Calu3 (cell line): ENCODE measurements at regions of chr5 and their contacts with region 1.

Region 1: GRCh38 chr5:112691758-112692157 is 45.9 kb upstream of the APC start:
- DNase-seq: peak; percentile 59
- H3K4me3 Mint-ChIP-seq: no peak overlapping the region
- H3K27ac Mint-ChIP-seq: no peak overlapping the region
- H3K4me1 Mint-ChIP-seq: peaks cover 8% of the 10 kb centered on the region
- H3K27me3 Mint-ChIP-seq: peaks cover 49% of the 10 kb centered on the region
- CTCF ChIP-seq: peak; percentile 38

Region 2: DNA sequence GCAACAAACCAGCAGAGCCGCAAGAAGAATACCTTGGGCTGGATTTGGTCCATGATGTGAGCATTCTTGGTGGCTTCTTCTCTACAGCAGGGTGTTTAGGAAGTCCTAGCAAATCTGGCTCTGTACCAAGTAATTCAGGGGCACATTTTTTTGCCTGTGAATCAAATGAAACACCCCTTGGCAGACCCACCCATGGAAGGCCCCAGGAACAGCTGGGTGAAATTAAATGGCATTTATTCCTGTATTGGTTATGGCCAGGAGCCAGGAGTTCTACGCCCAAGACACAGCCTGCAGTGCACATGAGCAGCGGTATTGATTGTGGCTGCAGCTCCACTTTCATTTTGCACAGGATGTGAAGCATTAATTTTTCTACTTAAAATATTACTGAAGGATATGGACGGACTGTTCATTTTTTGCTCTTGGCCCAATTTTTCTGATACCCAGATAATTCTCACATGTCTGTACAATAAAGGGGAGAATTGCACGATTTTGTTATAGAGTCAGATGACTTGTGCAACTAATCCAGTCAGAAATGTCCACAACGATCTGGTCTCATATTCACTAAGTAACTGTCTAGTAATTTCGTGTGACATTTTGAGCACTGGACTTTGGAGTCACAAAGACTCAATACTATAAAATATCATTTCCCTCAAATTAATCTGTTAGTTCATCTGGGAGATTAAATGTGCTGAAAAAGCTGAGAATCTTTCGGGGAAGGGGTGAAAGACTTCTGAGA is 74.8 kb before region 1 on chr5:
- CTCF ChIA-PET with region 1: no interaction called
- intact Hi-C with region 1: no loop called
- DNase-seq: peak; percentile 59
- H3K4me3 Mint-ChIP-seq: peak overlapping the region; percentile 66
- H3K27ac Mint-ChIP-seq: no peak overlapping the region
- H3K4me1 Mint-ChIP-seq: peaks cover 13% of the 10 kb centered on the region
- H3K27me3 Mint-ChIP-seq: no peaks in the 10 kb centered on the region
- CTCF ChIP-seq: no peak

Region 3: DNA sequence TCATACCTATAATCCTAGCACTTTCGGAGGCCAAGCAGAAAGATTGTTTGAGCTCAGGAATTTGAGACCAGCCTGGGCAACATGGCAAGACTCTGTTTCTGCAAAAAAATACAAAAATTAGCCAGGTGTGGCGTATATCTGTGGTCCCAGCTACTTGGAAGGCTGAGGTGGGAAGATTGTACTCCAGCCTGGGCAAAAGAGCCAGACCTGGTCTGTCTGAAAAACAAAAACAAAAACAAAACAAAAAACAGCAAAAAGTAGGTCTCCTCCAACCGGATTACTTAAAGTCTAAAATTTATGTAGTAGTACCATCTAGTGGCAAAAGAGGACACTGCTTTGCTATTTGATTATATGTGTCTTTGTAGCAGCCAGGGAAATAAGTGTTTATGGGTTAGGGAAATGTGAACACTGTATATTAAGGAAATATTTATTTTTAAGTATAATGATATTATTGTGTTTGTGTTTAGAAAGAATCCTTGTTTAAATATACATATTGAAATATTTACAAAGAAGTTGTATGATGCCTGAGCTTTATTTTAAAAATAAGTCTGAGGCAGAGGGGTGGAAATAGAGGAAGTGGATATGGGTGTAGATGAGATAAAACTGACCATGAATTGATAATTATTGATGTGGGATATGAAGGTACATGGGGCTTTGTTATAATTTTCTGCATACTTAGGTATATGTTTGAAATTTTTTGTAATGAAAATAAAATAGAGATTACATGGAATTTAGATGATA is 65.9 kb after region 1 on chr5:
- CTCF ChIA-PET with region 1: interaction called, 15 read pairs
- intact Hi-C with region 1: loop called (anchors 1 kb)
- DNase-seq: peak; percentile 11
- H3K4me3 Mint-ChIP-seq: no peak overlapping the region
- H3K27ac Mint-ChIP-seq: no peak overlapping the region
- H3K4me1 Mint-ChIP-seq: peaks cover 7% of the 10 kb centered on the region
- H3K27me3 Mint-ChIP-seq: no peaks in the 10 kb centered on the region
- CTCF ChIP-seq: peak; percentile 61

Region 4: DNA sequence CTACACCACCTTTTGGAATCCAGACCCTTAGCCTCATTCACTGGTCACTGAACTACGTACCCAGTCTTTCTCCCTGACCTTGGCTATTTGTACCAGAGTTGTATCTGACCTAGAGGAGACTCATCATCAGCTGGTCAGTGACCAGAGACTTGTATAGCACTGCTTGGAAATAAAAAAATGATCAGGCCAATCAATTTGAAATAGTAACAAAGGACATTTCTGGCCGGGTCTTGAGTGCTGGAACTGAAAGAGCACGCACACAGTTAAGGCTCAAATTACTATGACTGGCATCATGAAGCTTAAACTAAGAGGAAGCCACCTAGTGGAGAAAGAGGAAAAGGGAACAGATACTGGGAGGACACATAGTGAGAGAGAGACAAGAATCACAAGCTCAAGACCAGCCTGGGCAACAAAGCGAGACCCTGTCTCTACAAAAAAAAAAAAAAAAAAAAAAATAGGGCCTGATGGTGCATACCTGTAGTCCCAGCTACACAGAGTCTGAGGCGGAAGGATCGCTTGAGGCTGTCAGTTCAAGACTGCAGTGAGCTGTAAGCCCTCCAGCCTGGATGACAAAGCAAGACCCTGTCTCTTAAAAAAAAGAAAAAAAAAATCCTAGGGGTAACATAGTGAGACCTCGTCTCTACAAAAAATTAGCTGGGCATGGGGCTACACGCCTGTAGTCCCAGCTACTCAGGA is 156.5 kb after region 1 on chr5:
- CTCF ChIA-PET with region 1: interaction called, 25 read pairs
- intact Hi-C with region 1: loop called (anchors 1 kb)
- DNase-seq: peak; percentile 21
- H3K4me3 Mint-ChIP-seq: no peak overlapping the region
- H3K27ac Mint-ChIP-seq: no peak overlapping the region
- H3K4me1 Mint-ChIP-seq: no peaks in the 10 kb centered on the region
- H3K27me3 Mint-ChIP-seq: no peaks in the 10 kb centered on the region
- CTCF ChIP-seq: peak; percentile 64

Region 5: GRCh38 chr5:112921833-112922817 is 230.4 kb after region 1 on chr5 and contains the start of gene REEP5:
- CTCF ChIA-PET with region 1: no interaction called
- intact Hi-C with region 1: loop called (anchors 10 kb)
- DNase-seq: peak; percentile 93
- H3K4me3 Mint-ChIP-seq: peak within 1 kb of the TSS; percentile 100
- H3K27ac Mint-ChIP-seq: peak within 1 kb of the TSS; percentile 81
- H3K4me1 Mint-ChIP-seq: peaks cover 31% of the 10 kb centered on the region
- H3K27me3 Mint-ChIP-seq: no peaks in the 10 kb centered on the region
- CTCF ChIP-seq: peak; percentile 83
- total RNA-seq, gene REEP5: 123 and 130 TPM in 2 replicates